Activated naive CD8-positive, alpha-beta T cell treated with anti-CD3 and anti-CD28 coated beads, Interleukin-2, amount 10 ng/mL, durations not matched to agents 7 days and 5 days (primary cell): ENCODE measurements at regions of chr5 and their contacts with region 1.

Region 1: GRCh38 chr5:140302786-140303639 is at the start of gene PFDN1:
- DNase-seq: peak; percentile 88
- ATAC-seq: peak; percentile 100
- H3K4me3 Mint-ChIP-seq: peak within 1 kb of the TSS; percentile 98
- H3K27ac Mint-ChIP-seq: peak within 1 kb of the TSS; percentile 95
- H3K4me1 Mint-ChIP-seq: peaks cover 18% of the 10 kb centered on the region
- H3K27me3 Mint-ChIP-seq: peaks cover 11% of the 10 kb centered on the region
- total RNA-seq, gene PFDN1: 47.7 to 48.3 TPM

Region 2: DNA sequence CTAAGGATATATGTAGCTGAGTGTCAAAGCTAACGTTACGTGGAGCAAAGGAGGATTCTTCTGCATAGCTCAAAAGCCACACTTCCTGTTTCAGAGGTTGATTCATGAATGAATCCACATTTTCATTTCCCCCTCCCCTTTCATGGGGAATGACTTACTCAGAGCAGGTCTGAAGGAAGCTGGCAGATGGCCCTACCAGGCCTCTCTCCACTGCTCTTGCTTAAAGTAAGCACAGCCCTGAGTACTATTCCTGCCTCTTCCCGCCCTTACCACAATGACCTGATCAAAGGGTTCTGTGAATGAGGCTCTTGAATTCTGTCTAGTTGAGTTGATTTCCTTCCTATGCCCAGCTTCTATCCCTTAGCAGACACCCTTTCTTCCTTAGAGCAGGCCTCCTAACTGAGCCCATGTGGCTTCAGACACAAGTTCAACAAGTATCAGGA is 171.0 kb before region 1 on chr5:
- POLR2A ChIA-PET with region 1: no interaction called
- DNase-seq: no peak
- ATAC-seq: peak; percentile 68
- H3K4me3 Mint-ChIP-seq: peak overlapping the region; percentile 46
- H3K27ac Mint-ChIP-seq: peak overlapping the region; percentile 19
- H3K4me1 Mint-ChIP-seq: peaks cover 34% of the 10 kb centered on the region
- H3K27me3 Mint-ChIP-seq: peaks cover 6% of the 10 kb centered on the region

Region 3: GRCh38 chr5:140286424-140286823 is 16.6 kb before region 1 on chr5:
- POLR2A ChIA-PET with region 1: no interaction called
- DNase-seq: no peak
- ATAC-seq: no peak
- H3K4me3 Mint-ChIP-seq: no peak overlapping the region
- H3K27ac Mint-ChIP-seq: no peak overlapping the region
- H3K4me1 Mint-ChIP-seq: peaks cover 11% of the 10 kb centered on the region
- H3K27me3 Mint-ChIP-seq: no peaks in the 10 kb centered on the region

Region 4: DNA sequence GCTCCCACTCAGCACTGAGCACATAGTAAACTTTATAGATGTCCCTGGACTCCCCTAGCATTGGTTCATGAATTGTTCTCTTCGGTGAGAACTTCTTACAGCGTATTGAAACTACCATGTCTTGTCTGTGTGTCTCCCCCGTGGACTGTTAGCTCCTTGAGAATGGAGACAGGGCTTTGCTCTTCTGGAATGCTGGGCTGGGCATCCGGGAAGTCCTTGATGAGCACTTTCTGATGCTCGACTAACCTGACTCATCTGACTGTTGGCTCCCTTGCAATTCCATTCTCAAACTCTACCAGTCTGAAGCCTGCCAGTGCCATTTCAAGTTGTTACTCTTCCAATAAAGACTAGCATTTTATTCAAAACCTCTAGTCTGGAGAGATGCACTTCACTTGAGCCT is 14.8 kb after region 1 on chr5:
- POLR2A ChIA-PET with region 1: no interaction called
- DNase-seq: no peak
- ATAC-seq: no peak
- H3K4me3 Mint-ChIP-seq: no peak overlapping the region
- H3K27ac Mint-ChIP-seq: no peak overlapping the region
- H3K4me1 Mint-ChIP-seq: peaks cover 13% of the 10 kb centered on the region
- H3K27me3 Mint-ChIP-seq: peaks cover 7% of the 10 kb centered on the region

Region 5: DNA sequence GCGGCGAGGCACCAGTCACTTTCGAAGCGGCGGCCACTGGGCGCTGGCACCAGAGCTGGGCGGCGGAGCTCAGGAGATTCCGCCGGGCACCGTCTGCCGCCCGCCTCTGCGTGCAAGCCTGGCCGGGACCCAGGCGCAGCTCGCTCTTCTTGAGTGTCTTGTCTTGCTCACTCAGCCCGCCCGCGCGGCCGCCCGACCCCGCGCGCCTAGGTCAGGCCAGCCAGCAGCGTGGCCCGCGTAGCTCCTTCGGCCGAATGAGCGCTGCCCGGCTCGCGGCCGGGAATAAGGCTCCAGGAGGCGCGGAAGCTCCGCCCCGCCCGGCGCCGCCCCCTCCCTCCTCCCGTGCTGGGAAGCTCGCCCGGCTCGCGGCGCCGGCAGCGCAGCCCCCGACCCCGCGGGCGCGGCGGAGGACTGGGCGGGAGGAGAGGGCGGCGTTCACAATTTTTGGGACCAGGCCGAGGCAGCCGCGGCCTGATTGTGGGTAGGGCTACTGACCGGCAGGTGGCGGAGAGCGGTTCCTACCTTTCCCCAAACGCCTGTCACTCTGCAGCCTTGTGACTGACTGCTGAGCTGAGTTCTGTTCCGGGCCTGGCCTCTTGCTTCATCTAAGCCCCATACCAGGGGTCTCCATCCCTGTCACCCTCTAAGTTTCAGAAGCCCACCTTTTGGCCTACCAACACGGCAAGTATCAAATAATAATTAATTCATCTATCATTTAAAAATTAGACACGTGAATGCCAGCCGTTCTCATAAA is 43.5 kb after region 1 on chr5 and contains the start of gene HBEGF:
- POLR2A ChIA-PET with region 1: interaction called, 15 read pairs
- DNase-seq: peak; percentile 75
- ATAC-seq: peak; percentile 54
- H3K4me3 Mint-ChIP-seq: peak within 1 kb of the TSS; percentile 95
- H3K27ac Mint-ChIP-seq: peak within 1 kb of the TSS; percentile 84
- H3K4me1 Mint-ChIP-seq: peaks cover 58% of the 10 kb centered on the region
- H3K27me3 Mint-ChIP-seq: peaks cover 10% of the 10 kb centered on the region
- total RNA-seq, gene HBEGF: 12.8 TPM

Region 6: DNA sequence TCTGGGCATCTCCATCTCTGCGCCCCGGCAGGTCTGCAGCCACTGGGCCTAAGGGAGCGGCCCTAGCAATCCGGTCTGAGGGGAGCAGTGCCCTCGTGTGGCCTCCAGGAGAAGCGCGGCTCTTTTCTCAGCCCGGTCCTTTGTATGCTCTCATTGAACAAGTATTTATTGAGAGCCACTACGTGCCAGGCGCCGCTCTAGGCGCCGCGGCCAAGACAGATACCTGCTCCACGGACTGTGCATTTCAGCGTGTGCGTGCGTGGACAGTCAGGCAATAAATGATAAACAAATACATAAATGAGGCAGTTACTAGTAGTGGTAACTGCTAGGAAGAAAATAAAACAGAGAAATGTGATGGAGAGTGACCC is 54.7 kb after region 1 on chr5:
- POLR2A ChIA-PET with region 1: no interaction called
- DNase-seq: peak; percentile 82
- ATAC-seq: peak; percentile 93
- H3K4me3 Mint-ChIP-seq: peak overlapping the region; percentile 83
- H3K27ac Mint-ChIP-seq: peak overlapping the region; percentile 23
- H3K4me1 Mint-ChIP-seq: peaks cover 8% of the 10 kb centered on the region
- H3K27me3 Mint-ChIP-seq: peaks cover 3% of the 10 kb centered on the region